CD4-positive, alpha-beta T cell (primary cell): ENCODE measurements at regions of chr10 and their contacts with region 1.

Region 1: DNA sequence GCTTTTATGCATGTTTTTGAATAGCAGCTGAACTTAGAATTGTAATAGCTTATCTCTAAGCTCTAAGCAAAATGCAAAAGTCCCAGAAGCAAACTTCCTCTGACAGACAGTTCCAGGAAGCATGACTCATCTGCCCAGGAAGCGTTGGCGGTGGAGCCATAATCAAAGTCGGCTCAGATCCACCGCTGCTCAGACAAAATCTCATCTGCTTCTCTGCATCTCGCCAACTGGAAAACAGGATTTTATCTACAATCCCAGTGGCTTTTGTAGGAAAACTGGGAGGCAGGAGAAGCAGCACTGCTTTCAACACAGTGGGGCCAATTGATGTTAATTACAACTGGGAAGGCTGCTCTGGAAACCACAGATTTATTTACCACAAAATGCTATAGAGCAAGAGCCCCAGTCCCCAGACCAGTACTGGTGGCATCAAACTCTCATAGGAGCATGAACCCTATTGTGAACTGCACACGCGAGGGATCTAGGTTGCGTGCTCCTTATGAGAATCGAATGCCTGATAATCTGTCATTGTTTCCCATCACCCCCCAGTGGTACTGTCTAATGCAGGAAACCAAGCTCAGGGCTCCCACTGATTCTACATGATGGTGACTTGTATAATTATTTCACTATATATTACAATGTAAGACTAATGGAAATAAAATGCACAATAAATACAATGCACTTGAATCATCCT is 99.9 kb downstream of the CUBN start:
- DNase-seq: peak; percentile 53 to 91 (median 68)
- ATAC-seq: peak; percentile 65
- H3K4me3 ChIP-seq: peak overlapping the region; percentile 52
- H3K4me3 Mint-ChIP-seq: peak overlapping the region; percentile 76
- H3K27ac ChIP-seq: peak overlapping the region; percentile 81 to 82
- H3K27ac Mint-ChIP-seq: peak overlapping the region; percentile 88
- H3K4me1 ChIP-seq: peaks cover 65% of the 10 kb centered on the region
- H3K4me1 Mint-ChIP-seq: peaks cover 84% of the 10 kb centered on the region
- H3K27me3 ChIP-seq: no peaks in the 10 kb centered on the region
- H3K27me3 Mint-ChIP-seq: no peaks in the 10 kb centered on the region
- CTCF ChIP-seq: no peak

Region 2: DNA sequence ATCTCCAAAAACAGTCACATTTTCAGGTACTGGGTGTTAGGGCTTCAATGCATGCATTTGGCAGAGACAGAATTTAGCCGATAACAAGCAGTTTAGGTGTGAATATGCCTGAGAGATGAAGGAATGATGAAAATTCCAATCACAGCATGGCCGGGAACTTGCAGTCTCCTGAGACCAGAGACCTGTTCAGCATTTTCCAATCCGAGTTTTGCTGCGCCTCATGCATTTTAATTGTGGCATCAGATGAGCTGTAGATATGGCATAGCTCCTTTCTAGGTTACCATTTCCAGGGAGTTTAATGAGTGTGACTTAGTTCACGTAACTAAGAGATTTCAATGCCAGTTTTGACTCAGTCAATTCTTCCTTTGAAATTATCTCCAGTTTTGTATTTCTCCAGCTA is 493.6 kb before region 1 on chr10:
- CTCF ChIA-PET with region 1: no interaction called
- POLR2A ChIA-PET with region 1: no interaction called
- intact Hi-C with region 1: no loop called
- DNase-seq: no peak
- ATAC-seq: no peak
- H3K4me3 ChIP-seq: no peak overlapping the region
- H3K4me3 Mint-ChIP-seq: no peak overlapping the region
- H3K27ac ChIP-seq: no peak overlapping the region
- H3K27ac Mint-ChIP-seq: no peak overlapping the region
- H3K4me1 ChIP-seq: no peaks in the 10 kb centered on the region
- H3K4me1 Mint-ChIP-seq: no peaks in the 10 kb centered on the region
- H3K27me3 ChIP-seq: peaks cover 0 to 3% of the 10 kb centered on the region in 2 experiments
- H3K27me3 Mint-ChIP-seq: peaks cover 19% of the 10 kb centered on the region
- CTCF ChIP-seq: no peak

Region 3: GRCh38 chr10:17001961-17002749 is 27.6 kb before region 1 on chr10:
- CTCF ChIA-PET with region 1: interaction called, 3 read pairs
- POLR2A ChIA-PET with region 1: interaction called, 9 read pairs
- intact Hi-C with region 1: loop called in 1 of 2 experiments (anchors 1 kb)
- DNase-seq: peak in 4 of 14 experiments; percentile 38 to 92 (median 70)
- ATAC-seq: peak; percentile 40
- H3K4me3 ChIP-seq: no peak overlapping the region
- H3K4me3 Mint-ChIP-seq: peak overlapping the region; percentile 59
- H3K27ac ChIP-seq: peak overlapping the region; percentile 21 to 58
- H3K27ac Mint-ChIP-seq: peak overlapping the region; percentile 95
- H3K4me1 ChIP-seq: peaks cover 28% of the 10 kb centered on the region
- H3K4me1 Mint-ChIP-seq: peaks cover 66% of the 10 kb centered on the region
- H3K27me3 ChIP-seq: no peaks in the 10 kb centered on the region
- H3K27me3 Mint-ChIP-seq: no peaks in the 10 kb centered on the region
- CTCF ChIP-seq: no peak

Region 4: DNA sequence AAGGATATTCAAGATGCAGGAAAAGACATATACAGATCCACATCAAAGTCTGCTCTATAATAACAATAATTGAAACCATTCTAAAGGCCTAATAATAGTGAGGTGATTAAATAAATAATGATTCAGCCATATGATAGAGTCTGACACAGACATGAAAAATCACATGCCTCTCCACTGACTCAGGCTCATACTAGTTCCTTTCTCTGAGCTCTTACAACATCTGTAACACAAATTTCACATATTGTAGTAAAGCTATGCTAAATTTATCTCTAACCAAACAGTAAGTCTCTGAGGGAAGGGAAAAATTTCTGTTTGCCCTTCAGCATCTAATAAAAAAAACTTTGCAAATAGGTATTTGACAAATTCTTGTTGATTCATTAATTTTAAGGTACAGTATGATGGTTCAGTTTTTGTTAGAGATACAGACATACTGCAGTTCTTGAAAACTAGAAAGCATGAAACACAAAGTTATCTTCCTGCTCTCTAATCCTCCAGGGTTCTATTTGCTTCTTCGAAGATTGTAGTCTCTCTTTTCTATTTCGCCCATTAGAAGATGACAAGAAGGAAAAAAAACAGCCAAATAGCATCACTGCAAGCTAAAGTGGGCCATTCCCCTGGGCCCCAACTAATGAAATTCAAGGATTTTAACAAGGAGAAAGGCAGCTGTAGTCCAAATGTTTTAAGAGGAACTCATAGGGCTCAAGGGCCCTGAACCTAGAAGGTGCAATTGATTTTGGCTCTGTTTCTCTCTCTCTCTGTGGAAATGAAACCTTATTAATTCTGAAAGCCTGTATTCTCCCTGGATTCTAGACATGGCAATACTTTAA is 46.0 kb after region 1 on chr10:
- CTCF ChIA-PET with region 1: no interaction called
- POLR2A ChIA-PET with region 1: no interaction called
- intact Hi-C with region 1: loop called in 1 of 2 experiments (anchors 5 kb)
- DNase-seq: peak in 2 of 14 experiments; percentile 42 to 56
- ATAC-seq: no peak
- H3K4me3 ChIP-seq: no peak overlapping the region
- H3K4me3 Mint-ChIP-seq: no peak overlapping the region
- H3K27ac ChIP-seq: no peak overlapping the region
- H3K27ac Mint-ChIP-seq: no peak overlapping the region
- H3K4me1 ChIP-seq: no peaks in the 10 kb centered on the region
- H3K4me1 Mint-ChIP-seq: no peaks in the 10 kb centered on the region
- H3K27me3 ChIP-seq: no peaks in the 10 kb centered on the region
- H3K27me3 Mint-ChIP-seq: no peaks in the 10 kb centered on the region
- CTCF ChIP-seq: no peak